Testis (tissue), 5 donors: ENCODE measurements at regions of chr13 and their contacts with region 1.

Region 1: GRCh38 chr13:107205303-107206104 is 637.6 kb upstream of the ARGLU1 start:
- DNase-seq: peak; percentile 86
- H3K4me3 ChIP-seq: no peak overlapping the region
- H3K27ac ChIP-seq: no peak overlapping the region
- H3K4me1 ChIP-seq: no peaks in the 10 kb centered on the region
- H3K27me3 ChIP-seq: no peaks in the 10 kb centered on the region
- CTCF ChIP-seq: peak; percentile 76 to 99 (median 89)
- POLR2A ChIP-seq: no peak

Region 2: DNA sequence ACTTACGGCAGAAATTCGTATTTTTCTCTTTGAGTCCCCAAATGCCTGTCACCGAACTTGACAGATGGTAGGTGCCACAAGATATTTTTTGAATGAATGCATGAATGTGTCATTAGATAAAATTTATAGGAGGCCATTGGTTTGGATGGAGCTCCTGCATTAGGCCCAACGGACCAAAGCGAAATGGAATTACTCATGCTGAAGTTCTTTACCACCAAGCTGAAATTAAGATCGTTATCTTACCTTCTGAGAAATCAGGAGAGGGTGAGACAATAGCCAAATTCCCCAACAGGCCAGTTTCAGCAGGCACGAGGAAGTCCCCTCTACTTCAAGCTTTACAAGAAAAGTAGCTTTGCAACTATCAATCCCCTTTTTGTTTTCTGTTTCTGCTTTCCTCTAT is 185.1 kb before region 1 on chr13:
- intact Hi-C with region 1: no loop called
- DNase-seq: no peak
- H3K4me3 ChIP-seq: no peak overlapping the region
- H3K27ac ChIP-seq: no peak overlapping the region
- H3K4me1 ChIP-seq: no peaks in the 10 kb centered on the region
- H3K27me3 ChIP-seq: no peaks in the 10 kb centered on the region
- CTCF ChIP-seq: no peak
- POLR2A ChIP-seq: no peak

Region 3: DNA sequence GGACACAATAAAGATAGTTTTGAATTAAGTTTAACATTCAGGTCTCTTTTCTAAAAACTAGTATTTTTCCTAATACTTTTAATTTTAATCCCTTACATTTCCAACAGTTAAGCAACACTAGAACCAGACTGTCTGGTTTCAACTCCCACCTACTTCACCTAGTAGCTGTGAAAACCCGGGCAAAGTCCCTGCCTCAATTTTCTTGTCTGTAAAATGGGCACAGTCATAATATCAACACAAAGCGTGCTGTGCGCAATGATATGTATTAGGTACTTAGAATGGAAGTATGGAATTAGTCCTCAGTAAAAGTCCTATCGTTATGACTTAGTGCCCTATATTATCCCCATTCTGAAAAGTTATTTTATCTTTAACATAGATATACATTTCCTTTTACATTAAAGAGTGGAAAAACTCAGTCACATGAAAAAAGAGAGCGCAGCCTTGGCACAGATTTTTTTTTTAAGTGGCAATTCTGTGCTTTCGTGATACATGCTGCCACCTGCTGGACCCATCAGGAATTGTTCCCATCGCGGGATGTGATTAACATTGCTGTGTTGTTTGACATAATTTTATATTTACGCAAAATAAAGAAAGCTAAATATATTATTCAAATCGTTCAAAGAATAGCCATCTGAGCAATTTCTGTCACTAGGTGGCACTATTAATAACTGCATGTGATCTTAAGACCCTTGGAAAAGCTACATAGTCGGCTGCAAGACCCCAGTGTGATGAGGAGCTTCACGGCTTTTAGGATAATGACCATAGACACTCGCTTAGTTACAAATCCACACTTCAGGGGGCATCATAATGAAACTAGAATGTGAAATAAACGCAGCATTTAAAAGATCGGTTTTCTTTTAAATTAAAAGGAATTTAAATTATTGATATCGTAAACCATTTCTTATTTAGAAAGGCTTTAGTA is 949.9 kb after region 1 on chr13:
- intact Hi-C with region 1: loop called (anchors 10 kb)
- DNase-seq: peak; percentile 80
- H3K4me3 ChIP-seq: no peak overlapping the region
- H3K27ac ChIP-seq: no peak overlapping the region
- H3K4me1 ChIP-seq: no peaks in the 10 kb centered on the region
- H3K27me3 ChIP-seq: no peaks in the 10 kb centered on the region
- CTCF ChIP-seq: peak; percentile 75 to 88 (median 78)
- POLR2A ChIP-seq: no peak